PC-9 (cell line): ENCODE measurements at regions of chr1 and their contacts with region 1.

Region 1: GRCh38 chr1:197222014-197222685 is 45.9 kb upstream of the CRB1 start:
- DNase-seq: peak; percentile 79 to 91
- H3K4me3 ChIP-seq: peak overlapping the region; percentile 53; the same call in 1 of the 2 replicates
- H3K27ac ChIP-seq: peak overlapping the region; percentile 63
- H3K4me1 ChIP-seq: peaks cover 16% of the 10 kb centered on the region
- H3K27me3 ChIP-seq: no peaks in the 10 kb centered on the region
- CTCF ChIP-seq: no peak

Region 2: DNA sequence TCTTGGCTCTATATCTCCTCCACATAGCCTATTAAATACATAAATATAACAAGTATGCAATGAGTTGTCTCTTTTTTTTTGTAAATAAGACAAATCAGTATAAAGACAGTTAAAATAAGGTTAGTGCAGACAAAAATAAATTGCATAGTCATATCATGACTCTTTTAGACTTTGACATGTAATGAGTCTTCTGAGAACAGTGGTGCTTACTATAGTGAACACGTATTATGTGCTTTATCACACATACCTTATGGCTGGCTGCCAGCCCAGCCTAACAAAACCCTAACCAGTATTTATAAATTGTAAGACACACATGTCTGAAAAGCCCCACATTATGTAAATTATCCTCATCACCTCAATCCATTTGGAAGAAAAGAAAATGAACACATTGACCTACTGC is 126.0 kb before region 1 on chr1:
- CTCF ChIA-PET with region 1: no interaction called
- POLR2A ChIA-PET with region 1: no interaction called
- intact Hi-C with region 1: no loop called
- DNase-seq: no peak
- H3K4me3 ChIP-seq: no peak overlapping the region
- H3K27ac ChIP-seq: no peak overlapping the region
- H3K4me1 ChIP-seq: no peaks in the 10 kb centered on the region
- H3K27me3 ChIP-seq: no peaks in the 10 kb centered on the region
- CTCF ChIP-seq: no peak

Region 3: GRCh38 chr1:197180252-197180878 is 41.8 kb before region 1 on chr1:
- CTCF ChIA-PET with region 1: no interaction called
- POLR2A ChIA-PET with region 1: no interaction called
- intact Hi-C with region 1: loop called (anchors 2 kb)
- DNase-seq: peak in 1 of 2 experiments; percentile 63
- H3K4me3 ChIP-seq: no peak overlapping the region
- H3K27ac ChIP-seq: no peak overlapping the region
- H3K4me1 ChIP-seq: peaks cover 24% of the 10 kb centered on the region
- H3K27me3 ChIP-seq: no peaks in the 10 kb centered on the region
- CTCF ChIP-seq: peak; percentile 79

Region 4: DNA sequence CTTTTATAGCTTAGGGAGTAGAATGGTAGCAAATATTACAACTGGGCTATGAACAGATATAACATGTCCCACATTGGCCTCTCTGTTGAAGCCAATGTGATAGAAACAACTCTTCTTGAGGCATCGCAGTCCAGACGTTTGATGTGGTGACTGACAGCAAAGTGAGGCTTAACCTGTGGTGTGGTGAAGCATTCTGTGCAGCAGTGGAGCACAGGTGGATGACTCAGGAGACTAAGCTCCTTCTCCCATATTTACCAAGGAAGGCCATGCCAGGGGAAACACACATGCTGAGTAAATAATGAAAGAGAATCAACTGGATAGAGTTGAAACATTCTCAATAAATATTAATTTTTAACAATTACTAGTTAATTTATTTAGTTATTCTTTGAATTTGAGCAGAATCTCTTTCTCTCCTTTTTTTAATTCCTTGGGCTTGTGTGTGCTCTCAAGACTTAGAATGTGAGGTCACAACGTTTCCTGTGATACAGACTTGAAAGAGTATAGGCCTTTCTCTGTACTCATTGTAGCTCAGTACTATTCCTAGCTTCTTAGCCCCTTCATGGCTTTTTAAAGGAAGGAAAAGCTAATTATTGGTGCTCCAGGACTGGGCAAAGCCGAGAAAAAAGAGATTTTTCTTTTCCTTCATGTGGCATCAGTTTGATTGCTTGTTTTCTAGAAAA is 63.5 kb after region 1 on chr1:
- CTCF ChIA-PET with region 1: no interaction called
- POLR2A ChIA-PET with region 1: no interaction called
- intact Hi-C with region 1: no loop called
- DNase-seq: no peak
- H3K4me3 ChIP-seq: no peak overlapping the region
- H3K27ac ChIP-seq: no peak overlapping the region
- H3K4me1 ChIP-seq: 0 out of 2 replicates have a peak, but pooled peaks cover 3% of the 10 kb centered on the region
- H3K27me3 ChIP-seq: no peaks in the 10 kb centered on the region
- CTCF ChIP-seq: no peak

Region 5: DNA sequence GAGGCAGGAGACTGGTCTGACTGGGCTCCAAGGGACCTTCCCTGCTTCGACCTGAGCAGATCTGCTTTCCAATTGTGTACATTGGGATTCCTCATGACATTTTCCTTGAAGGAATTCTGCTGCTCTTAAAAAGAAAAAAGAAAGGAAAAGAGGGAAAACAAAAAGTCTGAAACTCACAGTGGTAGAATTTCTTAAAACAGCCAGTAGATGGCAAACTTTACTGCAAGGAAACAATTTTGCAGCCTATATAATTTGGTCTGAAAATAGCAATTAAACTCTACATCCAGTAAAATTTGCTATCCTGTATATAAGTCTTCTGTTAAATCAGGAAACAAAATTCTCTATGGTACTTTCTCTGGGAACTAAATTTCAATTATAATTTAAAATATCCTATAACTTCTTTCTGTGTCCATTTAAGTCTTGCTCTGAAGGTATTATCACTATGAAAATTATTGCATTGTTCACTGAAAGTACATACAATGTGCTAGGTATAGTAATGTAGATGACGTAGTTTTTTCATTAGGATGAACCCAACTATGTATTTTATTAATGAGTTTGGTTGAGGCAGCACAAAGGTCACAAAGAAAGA is 105.7 kb after region 1 on chr1:
- CTCF ChIA-PET with region 1: no interaction called
- POLR2A ChIA-PET with region 1: no interaction called
- intact Hi-C with region 1: no loop called
- DNase-seq: no peak
- H3K4me3 ChIP-seq: no peak overlapping the region
- H3K27ac ChIP-seq: no peak overlapping the region
- H3K4me1 ChIP-seq: no peaks in the 10 kb centered on the region
- H3K27me3 ChIP-seq: no peaks in the 10 kb centered on the region
- CTCF ChIP-seq: peak; percentile 76

Region 6: GRCh38 chr1:198318085-198318484 is 1095.9 kb after region 1 on chr1:
- CTCF ChIA-PET with region 1: no interaction called
- POLR2A ChIA-PET with region 1: interaction called, 10 read pairs
- intact Hi-C with region 1: no loop called
- DNase-seq: no peak
- H3K4me3 ChIP-seq: no peak overlapping the region
- H3K27ac ChIP-seq: no peak overlapping the region
- H3K4me1 ChIP-seq: no peaks in the 10 kb centered on the region
- H3K27me3 ChIP-seq: no peaks in the 10 kb centered on the region
- CTCF ChIP-seq: no peak